ENCODE measurements at regions of chr2 and their contacts with region 1.

Region 1: GRCh38 chr2:187581125-187581896 is 27.1 kb upstream of the TFPI start:
- DNase-seq: no peak
- ATAC-seq: peak in 1 of 2 donors; percentile 34

Region 2: DNA sequence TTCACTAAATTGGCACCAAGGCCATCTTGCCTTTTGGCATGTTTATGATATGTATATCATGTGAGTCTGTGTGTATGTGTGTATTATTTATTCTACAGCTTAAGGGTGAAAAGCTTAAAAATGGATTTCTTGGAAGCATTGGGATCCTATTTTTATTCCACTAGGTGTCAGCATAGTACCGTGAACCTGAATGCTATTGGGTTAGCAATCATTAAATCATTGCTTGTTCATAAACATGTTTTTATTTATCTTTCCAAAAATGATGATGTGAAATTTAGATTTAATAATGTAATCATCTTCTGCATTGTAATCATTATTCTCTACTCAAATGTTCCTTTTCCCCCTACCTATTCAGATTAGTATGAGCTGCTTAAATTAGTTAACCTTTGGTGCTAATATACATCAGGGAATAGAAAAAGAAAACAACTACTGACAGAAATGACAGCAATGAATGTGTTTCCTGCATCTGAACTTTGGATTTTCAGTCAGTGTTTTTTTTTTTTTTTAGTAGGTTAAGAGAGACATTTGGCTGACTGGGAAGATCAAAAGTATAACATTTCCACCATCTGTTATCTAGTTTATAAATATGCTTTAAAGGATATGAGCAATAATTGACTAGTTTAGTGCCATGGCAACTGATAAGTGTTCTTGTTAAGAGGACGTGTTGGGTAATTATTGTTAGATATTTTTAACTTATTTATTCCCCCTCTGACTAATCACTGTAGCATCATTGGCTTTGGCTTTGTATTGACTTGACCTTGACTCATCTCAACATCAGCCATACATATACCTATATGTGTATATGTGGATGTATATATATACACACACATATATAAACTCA is 718.2 kb before region 1 on chr2:
- intact Hi-C with region 1: loop called in 1 of 2 experiments (anchors 10 kb)
- DNase-seq: no peak
- ATAC-seq: peak in 1 of 2 donors; percentile 44

Region 3: GRCh38 chr2:187148059-187148714 is 433.1 kb before region 1 on chr2:
- intact Hi-C with region 1: no loop called
- DNase-seq: no peak
- ATAC-seq: no peak

Region 4: DNA sequence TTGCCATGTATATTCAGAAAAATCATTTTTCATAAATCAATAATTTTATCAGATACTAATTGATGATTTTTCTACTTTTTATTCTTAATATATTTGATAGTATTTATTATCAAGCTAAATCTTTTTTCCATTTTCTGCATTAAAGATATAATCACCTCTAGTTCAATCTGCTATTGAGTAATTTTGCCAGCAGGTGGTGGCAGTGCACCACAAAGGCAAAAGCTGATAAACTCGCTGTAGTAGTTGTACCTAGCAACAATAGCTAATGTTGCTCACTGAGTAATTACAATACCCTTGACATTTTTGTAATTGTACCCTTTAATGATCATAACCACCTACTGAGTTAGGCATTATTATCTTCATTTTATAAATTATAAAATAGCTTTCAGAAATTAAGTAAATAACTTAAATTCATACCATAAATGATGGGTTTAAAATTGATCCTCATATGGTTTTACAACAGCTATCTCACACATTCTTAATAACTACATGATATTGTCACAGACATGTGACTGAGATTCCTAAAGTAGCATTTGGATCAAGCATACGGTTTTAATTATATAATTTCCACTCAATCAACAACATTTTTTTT is 81.3 kb before region 1 on chr2:
- intact Hi-C with region 1: loop called in 1 of 2 experiments (anchors 2 kb)
- DNase-seq: peak; percentile 42
- ATAC-seq: peak; percentile 57 to 67

Region 5: DNA sequence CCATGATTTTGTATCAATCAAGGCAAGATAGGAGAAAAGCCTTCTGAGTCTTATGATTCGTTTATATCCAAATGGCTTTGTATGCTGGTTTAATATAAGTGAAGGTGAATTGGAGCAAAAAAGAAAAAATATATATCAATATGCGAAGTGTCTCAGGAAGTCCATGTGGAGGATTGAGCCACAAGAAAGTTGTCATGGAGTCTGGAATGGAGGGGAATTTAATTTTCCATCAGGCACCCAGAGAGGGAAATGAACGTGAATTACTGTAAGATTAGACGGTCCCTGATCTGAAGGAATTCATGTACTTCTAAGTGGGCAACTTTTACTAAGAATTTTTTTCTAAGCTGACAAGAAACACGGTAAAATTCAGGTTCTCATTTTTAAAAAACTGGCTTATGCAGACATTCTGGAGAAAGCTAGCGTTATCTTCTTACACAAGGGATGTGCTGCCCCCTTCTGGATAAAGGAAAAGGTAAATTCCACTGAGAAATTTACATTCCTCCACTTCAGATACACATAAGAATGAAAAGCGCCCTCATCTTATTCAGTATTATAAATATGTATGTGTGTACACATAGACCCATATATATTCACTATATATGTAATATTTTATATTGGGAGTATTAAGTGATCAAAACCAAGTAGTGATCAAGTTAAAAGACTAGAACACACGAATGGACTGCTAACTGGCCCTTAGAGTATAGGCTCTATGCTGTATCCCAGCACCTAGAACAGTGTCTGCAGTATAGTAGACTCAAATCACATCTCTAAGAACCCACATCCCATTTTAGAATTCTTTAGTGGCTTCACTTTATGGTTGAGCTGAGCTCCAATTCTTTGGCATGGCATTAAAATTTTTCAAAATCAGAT is 261.9 kb after region 1 on chr2:
- intact Hi-C with region 1: loop called in 1 of 2 experiments (anchors 10 kb)
- DNase-seq: no peak
- ATAC-seq: no peak

Region 6: DNA sequence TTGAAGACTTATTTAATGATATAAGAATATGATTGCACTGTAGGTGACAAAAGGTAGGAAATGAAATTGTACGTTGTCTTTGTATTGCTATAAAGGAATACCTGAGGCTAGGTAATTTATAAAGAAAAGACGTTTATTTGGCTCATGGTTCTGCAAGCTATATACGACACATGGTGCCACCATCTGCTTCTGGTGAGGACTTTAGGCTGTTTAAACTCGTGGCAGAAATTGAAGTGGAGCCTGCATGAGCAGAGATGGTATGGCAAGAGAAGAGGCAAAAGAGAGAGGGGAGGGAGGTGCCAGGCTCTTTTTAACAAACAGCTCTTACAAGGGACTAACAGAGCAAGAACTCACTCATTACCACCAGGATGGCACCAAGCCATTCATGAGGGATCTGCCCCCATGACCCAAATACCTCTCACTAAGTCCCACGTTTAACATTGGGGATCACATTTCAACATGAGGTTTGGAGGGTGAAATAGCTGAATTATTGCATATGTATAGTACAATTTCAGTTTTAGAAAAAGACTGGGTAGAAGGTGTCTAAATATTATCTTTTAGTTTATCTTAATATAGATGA is 797.1 kb after region 1 on chr2:
- intact Hi-C with region 1: loop called in 1 of 2 experiments (anchors 10 kb)
- DNase-seq: no peak
- ATAC-seq: no peak

Region 7: DNA sequence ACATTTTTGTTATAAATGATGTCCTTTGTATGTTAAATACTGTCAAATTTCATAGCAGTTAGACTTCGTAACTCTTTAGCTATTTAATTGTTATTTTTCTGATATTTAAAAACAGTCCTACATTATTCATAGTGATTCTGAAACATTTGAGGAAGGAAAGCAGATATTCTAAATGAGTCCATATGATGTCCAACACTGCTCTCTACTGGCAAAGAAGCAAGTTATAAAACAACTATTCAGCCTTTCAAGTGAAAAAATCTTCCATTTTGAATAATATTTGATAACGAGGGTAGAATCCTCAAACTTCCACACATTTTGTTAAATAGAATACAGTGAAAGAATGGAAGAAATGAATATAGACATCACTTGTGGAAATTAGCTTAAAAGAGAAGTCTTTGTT is 931.1 kb after region 1 on chr2:
- intact Hi-C with region 1: loop called (anchors 5 to 10 kb)
- DNase-seq: no peak
- ATAC-seq: peak in 1 of 2 donors; percentile 38